ENCODE measurements at regions of chr12 and their contacts with region 1.

Region 1: DNA sequence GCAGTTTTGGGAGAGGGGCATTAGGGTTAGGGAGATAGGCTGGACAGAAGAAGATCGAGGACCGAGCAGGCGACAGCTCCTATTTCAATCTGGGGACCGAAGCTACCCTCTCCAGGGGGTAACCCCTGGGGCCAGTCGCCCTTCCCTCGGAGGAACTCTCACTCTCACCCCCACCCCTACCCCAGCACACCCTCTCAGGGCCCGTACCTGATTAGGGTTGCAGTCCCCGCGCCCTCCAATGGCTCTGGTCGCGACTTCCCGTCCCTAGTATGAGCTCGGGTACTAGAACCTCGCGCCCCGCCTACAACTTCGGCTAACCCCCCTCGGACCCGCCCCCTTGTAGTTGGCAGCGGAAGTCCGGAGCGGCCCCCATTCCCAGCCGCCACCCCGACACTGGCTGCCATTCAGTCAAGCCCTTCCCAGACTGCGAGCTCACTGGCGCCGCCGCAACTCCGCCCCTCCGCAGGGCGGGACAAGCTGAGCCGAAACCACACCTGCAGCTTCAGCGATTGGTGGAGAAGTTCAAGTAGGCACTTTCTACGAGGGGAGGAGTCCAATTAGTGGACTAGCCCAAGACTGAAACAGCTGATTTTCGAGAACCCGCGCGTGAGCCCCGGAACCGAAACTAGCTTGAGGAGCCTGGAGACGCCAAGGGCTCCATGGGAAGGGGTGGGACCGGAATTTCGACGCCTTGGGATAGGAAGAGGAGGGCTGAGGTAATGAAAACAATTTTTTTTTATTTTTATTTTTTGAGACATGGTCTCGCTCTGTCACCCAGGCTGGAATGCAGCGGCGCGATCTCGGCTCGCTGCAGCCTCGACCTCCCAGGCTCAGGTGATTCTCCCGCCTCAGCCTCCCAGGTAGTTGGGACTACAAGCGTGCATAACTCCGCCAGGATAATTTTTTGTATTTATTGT is at the start of gene STAT2:
- DNase-seq: peak; percentile 99 to 100
- H3K4me3 ChIP-seq: peak within 1 kb of the TSS; percentile 69 to 76 (median 72)
- H3K27ac ChIP-seq: peak within 1 kb of the TSS; percentile 88 to 96 (median 95)
- H3K4me1 ChIP-seq: peaks cover 12 to 32% (median 20%) of the 10 kb centered on the region in 4 donors
- H3K27me3 ChIP-seq: no peaks in the 10 kb centered on the region
- CTCF ChIP-seq: peak in 1 of 7 experiments; percentile 27
- EP300 ChIP-seq: no peak
- POLR2A ChIP-seq: peak in 2 of 4 donors; percentile 58 to 59
- total RNA-seq, gene STAT2: 82.6 to 245 (median 104) TPM

Region 2: DNA sequence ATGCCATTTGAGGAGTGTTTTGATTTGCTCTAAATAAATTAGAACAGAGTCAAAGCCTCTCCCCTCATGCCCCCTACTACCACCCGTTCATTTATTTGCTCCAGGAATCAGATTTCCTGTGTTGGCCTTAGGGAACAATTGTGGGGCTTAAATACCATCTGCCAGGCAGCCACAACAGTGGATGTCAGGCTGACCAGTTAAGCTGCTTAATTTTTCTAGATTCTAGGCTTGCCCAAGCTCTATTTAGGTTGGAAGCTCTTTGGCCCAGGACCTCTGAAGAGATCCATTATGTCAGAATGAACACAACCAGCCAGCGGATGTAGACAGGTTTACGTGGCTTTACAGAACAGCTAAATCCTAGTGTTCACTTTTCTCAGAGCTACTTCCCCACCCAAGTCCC is 90.1 kb after region 1 on chr12:
- intact Hi-C with region 1: loop called (anchors 10 kb)
- DNase-seq: no peak
- H3K4me3 ChIP-seq: no peak overlapping the region
- H3K27ac ChIP-seq: no peak overlapping the region
- H3K4me1 ChIP-seq: peaks cover 9 to 19% (median 13%) of the 10 kb centered on the region in 4 donors
- H3K27me3 ChIP-seq: no peaks in the 10 kb centered on the region
- CTCF ChIP-seq: no peak
- EP300 ChIP-seq: no peak
- POLR2A ChIP-seq: no peak

Region 3: GRCh38 chr12:56601503-56601902 is 241.4 kb after region 1 on chr12:
- intact Hi-C with region 1: no loop called
- DNase-seq: peak in 1 of 2 donors; percentile 28
- H3K4me3 ChIP-seq: no peak overlapping the region
- H3K27ac ChIP-seq: no peak overlapping the region
- H3K4me1 ChIP-seq: no peaks in the 10 kb centered on the region
- H3K27me3 ChIP-seq: no peaks in the 10 kb centered on the region
- CTCF ChIP-seq: peak in 1 of 7 experiments; percentile 4
- EP300 ChIP-seq: no peak
- POLR2A ChIP-seq: no peak